ENCODE measurements at regions of chr7 and their contacts with region 1.

Region 1: DNA sequence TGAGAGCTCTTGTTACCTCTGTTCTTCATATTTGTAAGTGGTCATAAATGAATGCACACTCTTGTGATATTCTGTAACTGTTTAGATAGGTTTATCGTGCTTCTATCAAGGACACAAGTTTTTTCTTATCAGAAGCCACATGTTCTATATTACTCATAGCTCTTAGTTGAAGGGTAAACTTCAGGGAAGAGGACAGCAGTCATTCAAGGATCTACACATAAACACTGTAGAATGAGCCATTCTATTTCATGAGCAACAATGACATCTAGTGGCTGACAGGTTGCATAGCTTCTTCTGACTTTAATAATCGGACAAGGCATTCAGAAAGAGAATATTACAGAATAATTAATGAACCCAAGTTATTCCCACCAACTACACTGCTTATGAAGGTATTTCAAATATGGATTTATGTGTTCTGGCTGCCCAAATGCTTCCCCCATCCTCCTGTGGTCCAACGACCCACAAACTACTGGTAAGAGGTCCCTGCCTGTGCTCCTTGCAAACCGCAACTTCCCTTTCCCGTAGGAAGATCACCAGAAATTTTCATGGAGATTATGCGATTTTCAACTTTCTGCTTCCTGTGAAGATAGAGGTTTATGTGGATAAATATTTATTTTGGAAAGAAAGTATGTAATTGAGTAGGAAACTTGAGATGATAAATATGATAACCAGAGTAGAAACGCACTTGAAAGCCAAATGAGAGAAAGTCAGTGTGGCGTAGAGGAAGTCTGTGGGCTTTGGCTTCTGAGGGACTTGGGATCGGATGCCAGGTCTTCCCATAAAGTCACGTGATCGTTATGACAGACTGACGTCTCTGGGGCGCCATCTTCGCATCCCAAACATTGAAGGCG is 16.8 kb upstream of the ABCB5 start:
- DNase-seq: no peak
- H3K4me3 ChIP-seq: no peak overlapping the region
- H3K27ac ChIP-seq: no peak overlapping the region
- H3K4me1 ChIP-seq: peaks cover 13% of the 10 kb centered on the region
- H3K27me3 ChIP-seq: no peaks in the 10 kb centered on the region
- CTCF ChIP-seq: peak; percentile 52 to 91 (median 77)
- POLR2A ChIP-seq: no peak

Region 2: GRCh38 chr7:19713676-19714075 is 885.0 kb before region 1 on chr7:
- intact Hi-C with region 1: loop called (anchors 10 kb)
- DNase-seq: no peak
- H3K4me3 ChIP-seq: no peak overlapping the region
- H3K27ac ChIP-seq: no peak overlapping the region
- H3K4me1 ChIP-seq: peaks cover 7% of the 10 kb centered on the region
- H3K27me3 ChIP-seq: no peaks in the 10 kb centered on the region
- CTCF ChIP-seq: peak in 1 of 3 experiments; percentile 64
- POLR2A ChIP-seq: no peak